ENCODE measurements at regions of chr22 and their contacts with region 1.

Region 1: GRCh38 chr22:16932577-16932976 is 75.4 kb downstream of the GAB4 start:
- DNase-seq: no peak
- H3K4me3 ChIP-seq: no peak overlapping the region
- CTCF ChIP-seq: no peak

Region 2: DNA sequence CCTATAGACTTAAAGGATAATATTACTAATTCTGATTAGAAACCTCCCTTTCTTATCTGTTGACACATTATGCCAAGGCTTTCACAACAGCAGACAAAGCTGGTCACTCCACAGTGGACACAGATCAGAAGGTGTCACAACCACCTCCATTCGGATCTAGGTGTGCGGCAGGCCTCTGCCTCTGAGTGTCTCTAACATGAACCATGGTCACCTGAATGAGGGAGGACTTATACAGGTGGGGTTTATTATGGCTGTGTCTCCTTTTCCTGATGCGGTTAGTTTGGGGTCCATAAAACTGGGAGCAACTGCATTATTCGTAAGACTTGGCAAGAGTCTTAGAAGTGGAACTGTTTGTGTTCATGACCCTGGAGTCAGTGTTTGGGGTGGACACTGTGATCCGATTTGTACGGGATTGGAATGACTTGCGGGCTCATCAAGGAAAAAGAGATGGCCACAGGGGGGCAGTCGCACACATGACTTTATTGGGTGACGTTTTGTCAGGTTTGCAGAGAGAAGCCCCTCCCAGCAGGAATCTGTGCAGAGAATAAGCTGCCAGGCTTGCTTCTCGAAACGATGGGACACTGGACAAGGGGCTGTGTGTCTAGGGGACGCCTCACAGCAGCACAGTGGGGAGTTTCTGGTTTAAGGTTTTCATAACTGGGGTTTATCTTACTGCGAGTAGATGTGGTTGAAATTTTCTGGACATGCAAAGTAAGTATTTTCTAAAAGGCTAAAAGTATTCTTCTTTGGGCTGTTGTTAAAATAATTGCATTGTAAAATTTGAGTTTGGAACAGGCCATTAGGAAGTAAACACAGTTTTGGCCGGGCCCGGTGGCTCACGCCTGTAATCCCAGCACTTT is 15.2 kb before region 1 on chr22:
- CTCF ChIA-PET with region 1: interaction called, 13 read pairs
- POLR2A ChIA-PET with region 1: no interaction called
- DNase-seq: no peak
- H3K4me3 ChIP-seq: no peak overlapping the region
- CTCF ChIP-seq: peak; percentile 38

Region 3: DNA sequence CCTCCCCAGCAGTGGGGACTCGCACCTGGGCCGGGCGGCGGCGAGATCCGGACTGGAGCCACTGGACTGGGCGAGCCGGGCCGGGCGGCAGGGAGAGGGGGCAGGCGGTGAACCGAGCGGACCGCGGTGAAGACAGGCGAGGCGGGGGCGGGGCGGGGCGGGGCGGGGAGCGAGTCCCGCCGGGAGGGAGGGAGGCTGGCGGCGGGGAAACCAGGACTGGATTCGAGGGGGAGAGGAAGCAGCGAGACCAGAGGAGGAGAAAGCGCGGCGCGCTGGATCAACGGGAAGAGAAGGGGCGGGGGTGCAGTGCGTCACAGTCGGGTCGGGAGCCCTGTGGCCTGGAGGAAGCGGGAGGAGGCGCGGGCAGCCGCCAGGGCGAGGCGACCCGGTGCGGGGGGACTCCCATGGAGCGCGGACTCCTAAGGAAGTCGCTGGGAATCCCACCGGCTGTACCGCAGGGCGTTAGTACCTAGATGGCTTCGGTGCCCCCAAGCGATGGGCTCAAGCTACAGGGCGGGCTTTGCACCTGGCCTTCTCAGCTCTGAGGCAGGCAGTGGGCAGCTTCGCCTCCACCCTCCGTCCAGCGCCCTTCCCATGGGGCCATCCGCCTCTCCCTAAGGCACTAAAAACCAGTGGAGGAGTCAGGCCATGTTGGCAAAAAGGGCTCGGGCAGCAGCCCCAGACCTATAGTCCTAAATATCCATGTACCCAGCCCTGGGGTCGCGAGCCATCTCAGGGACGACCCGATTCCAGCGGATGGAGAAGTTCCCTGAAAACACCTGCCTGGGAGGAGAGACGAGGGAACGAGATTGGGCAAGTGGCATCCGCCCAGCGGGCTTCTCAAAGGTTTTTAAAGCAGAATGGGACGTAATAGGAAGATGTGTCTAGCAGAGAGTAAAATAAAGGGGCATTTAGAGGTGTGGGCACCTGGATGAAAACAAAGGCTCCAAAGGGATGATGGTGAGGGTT is 188.9 kb after region 1 on chr22 and contains the start of gene TMEM121B:
- CTCF ChIA-PET with region 1: no interaction called
- POLR2A ChIA-PET with region 1: no interaction called
- DNase-seq: no peak
- H3K4me3 ChIP-seq: peak within 1 kb of the TSS; percentile 36
- CTCF ChIP-seq: no peak